Right ventricle myocardium inferior (tissue), 1 donor: ENCODE measurements at regions of chr1 and their contacts with region 1.

Region 1: DNA sequence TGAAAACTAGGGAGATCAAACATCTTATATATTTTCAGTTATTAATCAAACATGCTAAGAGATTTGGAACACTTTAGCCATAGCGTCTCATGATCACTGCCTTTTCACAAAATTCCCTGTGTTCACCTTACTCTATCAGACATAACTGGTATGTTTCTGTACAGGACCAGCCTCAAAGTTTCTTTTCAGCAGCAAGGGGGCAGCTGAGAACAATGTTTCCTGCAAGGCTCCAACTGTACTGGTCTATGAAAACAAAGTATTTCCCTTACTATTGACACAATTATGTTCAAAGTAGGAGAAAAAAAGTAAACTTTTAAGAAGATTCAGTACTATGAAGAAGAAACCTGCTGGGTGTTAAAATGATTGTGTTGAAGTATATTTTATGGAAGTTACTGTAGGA is 98.5 kb downstream of the ATF6 start:
- DNase-seq: no peak
- ATAC-seq: no peak

Region 2: GRCh38 chr1:161986328-161986727 is 121.8 kb after region 1 on chr1:
- intact Hi-C with region 1: no loop called
- DNase-seq: no peak
- ATAC-seq: peak; percentile 59

Region 3: GRCh38 chr1:162035241-162035640 is 170.7 kb after region 1 on chr1:
- intact Hi-C with region 1: loop called (anchors 5 kb)
- DNase-seq: no peak
- ATAC-seq: no peak

Region 4: DNA sequence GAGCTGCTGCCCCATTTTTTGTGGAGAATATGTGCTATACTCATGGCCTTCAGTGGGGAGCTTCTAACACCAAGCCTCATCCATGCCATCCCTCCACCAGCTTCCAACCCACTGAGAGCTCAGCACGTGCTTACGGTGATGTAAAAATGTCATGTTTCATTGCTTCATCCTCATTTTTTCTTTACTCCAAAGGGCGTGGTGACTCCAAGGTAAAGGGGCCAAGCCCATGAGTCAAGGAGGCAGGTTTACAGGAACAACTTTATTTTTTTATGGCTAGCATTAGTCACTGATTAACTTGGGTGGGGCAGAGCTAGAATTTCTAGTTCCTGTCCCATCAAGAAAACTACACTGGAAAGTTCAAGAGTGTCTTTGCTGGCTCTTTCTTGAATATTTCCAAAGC is 516.8 kb after region 1 on chr1 and contains the start of gene C1orf226:
- intact Hi-C with region 1: no loop called
- DNase-seq: no peak
- ATAC-seq: no peak
- total RNA-seq, gene C1orf226: 4.6 TPM